ENCODE measurements at regions of chr2 and their contacts with region 1.

Region 1: GRCh38 chr2:127943186-127943585 is 57.4 kb upstream of the AMMECR1L start:
- DNase-seq: no peak
- ATAC-seq: no peak
- H3K4me3 ChIP-seq: no peak overlapping the region
- H3K27ac ChIP-seq: no peak overlapping the region
- H3K4me1 ChIP-seq: no peaks in the 10 kb centered on the region
- H3K27me3 ChIP-seq: no peaks in the 10 kb centered on the region
- CTCF ChIP-seq: no peak

Region 2: GRCh38 chr2:127932199-127932878 is 10.8 kb before region 1 on chr2:
- CTCF ChIA-PET with region 1: no interaction called
- POLR2A ChIA-PET with region 1: interaction called, 10 read pairs
- in situ Hi-C with region 1: no loop called
- intact Hi-C with region 1: no loop called
- DNase-seq: peak; percentile 86
- ATAC-seq: peak; percentile 87
- H3K4me3 ChIP-seq: no peak overlapping the region
- H3K27ac ChIP-seq: no peak overlapping the region
- H3K4me1 ChIP-seq: 0 out of 2 replicates have a peak, but pooled peaks cover 3% of the 10 kb centered on the region
- H3K27me3 ChIP-seq: no peaks in the 10 kb centered on the region
- CTCF ChIP-seq: no peak

Measured in Panc1 (cell line).